ENCODE measurements at regions of chr3 and their contacts with region 1.

Region 1: DNA sequence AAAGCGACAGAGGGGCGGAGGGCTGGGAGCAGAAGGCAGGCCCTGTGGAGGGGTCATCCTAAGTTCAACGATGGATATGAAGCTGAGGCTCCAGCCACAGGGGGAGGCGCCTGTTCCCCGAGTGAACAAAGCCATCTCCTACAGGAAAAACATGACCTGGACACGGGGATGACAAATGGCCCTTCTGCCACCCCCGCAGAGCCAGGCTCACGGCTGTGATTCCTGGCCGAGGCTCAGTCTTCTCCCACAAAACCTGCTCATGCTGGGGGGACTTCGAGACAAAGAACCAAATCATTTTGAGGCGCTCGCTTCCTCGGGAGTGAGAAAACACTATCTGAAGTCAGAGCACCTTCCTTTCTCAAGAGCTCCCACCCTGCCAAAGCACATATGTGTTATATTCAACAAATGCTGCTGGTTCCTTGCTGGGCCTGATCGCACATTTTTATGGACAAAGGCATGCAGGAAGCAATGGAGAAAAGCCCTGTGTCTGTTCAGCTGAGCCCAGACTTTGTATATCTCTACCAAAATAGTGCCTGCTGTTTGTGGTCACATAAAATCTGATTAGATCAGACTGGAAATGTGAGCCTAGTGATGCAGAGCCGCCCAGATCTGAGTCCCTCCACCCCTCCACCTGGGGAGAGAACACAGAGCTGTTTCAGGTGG is 5.6 kb downstream of the RBP1 start:
- DNase-seq: peak; percentile 81
- H3K4me3 ChIP-seq: no peak overlapping the region
- H3K27ac ChIP-seq: peak overlapping the region; percentile 92
- H3K4me1 ChIP-seq: peaks cover 54% of the 10 kb centered on the region
- H3K27me3 ChIP-seq: no peaks in the 10 kb centered on the region
- CTCF ChIP-seq: no peak

Region 2: DNA sequence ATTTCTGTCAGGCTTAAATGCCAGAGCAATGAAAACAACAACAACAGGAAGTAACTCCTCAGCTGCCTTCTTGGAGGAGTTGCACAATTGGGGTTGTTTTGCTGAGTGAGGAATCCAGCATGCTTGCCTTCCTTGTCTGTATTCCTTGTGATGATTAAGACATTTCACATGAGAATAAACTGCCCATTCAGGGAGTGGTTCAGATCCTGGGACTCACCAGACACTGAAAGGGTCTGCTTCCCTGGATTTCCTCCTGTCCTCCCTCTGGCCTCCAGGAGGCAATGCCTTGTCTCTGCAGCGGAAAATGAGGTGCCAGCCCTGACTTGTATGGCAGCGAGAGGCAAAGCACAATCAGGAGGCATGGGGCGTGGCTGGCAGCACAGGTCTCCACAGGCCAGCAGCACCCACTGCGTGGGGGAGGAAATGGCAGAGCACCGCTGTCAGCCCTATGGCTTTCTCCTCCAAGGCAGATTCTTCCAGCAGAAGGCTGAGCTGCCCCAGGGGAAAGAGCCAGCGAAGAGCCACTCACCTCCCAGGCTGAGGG is 99.1 kb before region 1 on chr3:
- CTCF ChIA-PET with region 1: no interaction called
- dilution Hi-C with region 1: no loop called
- in situ Hi-C with region 1: no loop called
- intact Hi-C with region 1: loop called (anchors 1 kb)
- DNase-seq: peak; percentile 92
- H3K4me3 ChIP-seq: no peak overlapping the region
- H3K27ac ChIP-seq: peak overlapping the region; percentile 11
- H3K4me1 ChIP-seq: peaks cover 19% of the 10 kb centered on the region
- H3K27me3 ChIP-seq: no peaks in the 10 kb centered on the region
- CTCF ChIP-seq: peak; percentile 31 to 67

Region 3: DNA sequence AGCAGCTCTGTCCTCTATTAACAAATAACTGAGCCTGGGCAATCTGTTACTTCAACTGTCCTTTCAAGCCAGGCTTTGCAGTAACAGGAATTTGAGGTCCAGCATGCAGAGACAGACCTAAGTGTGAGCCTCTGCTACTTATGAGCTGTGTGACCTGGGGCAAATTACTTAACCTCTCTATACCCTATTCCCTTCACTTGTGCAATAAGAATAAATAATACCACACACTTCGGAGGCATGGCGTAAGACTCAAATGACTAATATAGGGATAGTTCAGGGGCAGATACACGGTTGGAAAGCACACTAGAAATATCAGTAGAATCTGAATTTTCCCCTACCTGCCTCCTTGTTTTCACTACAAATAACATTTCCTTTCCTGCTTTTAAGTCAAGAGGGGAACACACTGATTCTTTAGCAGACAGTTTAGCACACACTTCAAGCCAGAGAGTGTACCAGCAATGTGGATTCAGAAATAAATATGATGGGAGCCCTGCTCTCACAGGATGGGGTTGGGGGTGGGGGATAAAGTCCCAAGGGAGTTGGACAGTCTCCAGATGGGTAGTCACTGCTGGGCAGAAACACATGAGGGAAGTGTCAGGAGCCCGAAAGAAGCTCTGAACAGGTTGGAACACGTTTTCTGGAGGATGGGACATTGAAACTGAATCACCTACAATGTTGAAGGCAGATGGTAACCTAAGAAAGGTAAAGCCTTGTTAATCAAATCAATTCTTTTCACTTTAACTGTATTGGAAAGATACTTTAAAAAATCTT is 67.5 kb after region 1 on chr3:
- CTCF ChIA-PET with region 1: no interaction called
- dilution Hi-C with region 1: no loop called
- in situ Hi-C with region 1: no loop called
- intact Hi-C with region 1: loop called (anchors 5 kb)
- DNase-seq: peak; percentile 91
- H3K4me3 ChIP-seq: peak overlapping the region in 2 of 3 experiments; percentile 15 to 22
- H3K27ac ChIP-seq: peak overlapping the region; percentile 91
- H3K4me1 ChIP-seq: peaks cover 20% of the 10 kb centered on the region
- H3K27me3 ChIP-seq: no peaks in the 10 kb centered on the region
- CTCF ChIP-seq: no peak